H1 (cell line): ENCODE measurements at regions of chr11 and their contacts with region 1.

Region 1: DNA sequence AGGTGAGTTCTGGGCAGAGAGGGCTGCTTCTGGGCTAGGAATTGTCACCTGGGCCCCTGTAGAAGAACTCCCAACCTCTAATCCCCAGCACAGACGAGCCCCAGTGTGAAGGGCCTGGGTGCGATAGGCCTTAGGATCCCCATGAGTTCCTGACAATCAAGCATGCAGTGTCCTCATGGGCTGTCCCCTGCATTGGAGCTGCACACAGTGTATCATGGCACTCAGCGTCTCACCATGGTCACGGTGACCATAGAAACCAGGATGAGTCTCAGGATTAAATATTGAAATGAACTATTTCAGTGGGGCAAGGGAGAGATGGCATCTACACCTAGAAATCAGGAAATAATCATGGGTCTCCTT is 292 bp downstream of the SCGB2A1 start:
- DNase-seq: no peak
- H3K4me3 ChIP-seq: no peak overlapping the region
- H3K27ac ChIP-seq: no peak overlapping the region
- H3K4me1 ChIP-seq: no peaks in the 10 kb centered on the region
- H3K27me3 ChIP-seq: no peaks in the 10 kb centered on the region
- CTCF ChIP-seq: no peak
- EP300 ChIP-seq: no peak
- POLR2A ChIP-seq: no peak
- RAD21 ChIP-seq: no peak

Region 2: DNA sequence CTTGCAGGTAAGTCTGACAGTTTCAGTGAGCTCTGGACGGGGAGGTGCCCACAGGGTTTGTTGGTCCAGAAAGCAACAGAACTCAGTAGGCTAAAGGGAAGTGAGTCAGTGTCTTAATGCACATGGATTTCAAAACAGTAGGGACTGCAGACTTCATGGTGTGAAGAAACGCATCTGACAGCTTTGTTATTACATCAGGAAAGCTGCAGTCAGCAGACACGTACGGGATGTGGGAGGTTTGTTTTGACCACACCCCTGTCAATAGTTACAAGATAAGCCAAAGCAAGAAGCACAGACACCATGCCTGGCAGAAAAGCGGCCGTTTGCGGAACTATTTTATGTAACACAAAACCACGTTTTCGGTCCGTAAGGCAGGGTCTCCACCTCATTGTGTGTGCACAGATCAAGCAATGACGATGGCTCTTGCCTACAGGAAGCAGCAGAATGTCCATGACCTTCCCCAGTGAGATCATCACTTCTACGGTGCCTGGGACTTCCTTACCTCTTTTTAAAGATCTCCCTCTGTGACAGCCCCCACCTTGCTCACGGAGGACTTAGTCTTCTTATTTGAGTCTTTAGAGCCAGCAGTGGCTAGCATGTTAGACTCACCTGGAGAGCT is 183.2 kb before region 1 on chr11:
- CTCF ChIA-PET with region 1: no interaction called
- POLR2A ChIA-PET with region 1: no interaction called
- DNase-seq: no peak
- H3K4me3 ChIP-seq: no peak overlapping the region
- H3K27ac ChIP-seq: no peak overlapping the region
- H3K4me1 ChIP-seq: peaks cover 0 to 3% (median 3%) of the 10 kb centered on the region in 4 experiments; a peak in 3 of 7 replicates
- H3K27me3 ChIP-seq: no peaks in the 10 kb centered on the region; a peak in 1 of 7 replicates
- CTCF ChIP-seq: no peak
- EP300 ChIP-seq: no peak
- POLR2A ChIP-seq: no peak
- RAD21 ChIP-seq: no peak

Region 3: DNA sequence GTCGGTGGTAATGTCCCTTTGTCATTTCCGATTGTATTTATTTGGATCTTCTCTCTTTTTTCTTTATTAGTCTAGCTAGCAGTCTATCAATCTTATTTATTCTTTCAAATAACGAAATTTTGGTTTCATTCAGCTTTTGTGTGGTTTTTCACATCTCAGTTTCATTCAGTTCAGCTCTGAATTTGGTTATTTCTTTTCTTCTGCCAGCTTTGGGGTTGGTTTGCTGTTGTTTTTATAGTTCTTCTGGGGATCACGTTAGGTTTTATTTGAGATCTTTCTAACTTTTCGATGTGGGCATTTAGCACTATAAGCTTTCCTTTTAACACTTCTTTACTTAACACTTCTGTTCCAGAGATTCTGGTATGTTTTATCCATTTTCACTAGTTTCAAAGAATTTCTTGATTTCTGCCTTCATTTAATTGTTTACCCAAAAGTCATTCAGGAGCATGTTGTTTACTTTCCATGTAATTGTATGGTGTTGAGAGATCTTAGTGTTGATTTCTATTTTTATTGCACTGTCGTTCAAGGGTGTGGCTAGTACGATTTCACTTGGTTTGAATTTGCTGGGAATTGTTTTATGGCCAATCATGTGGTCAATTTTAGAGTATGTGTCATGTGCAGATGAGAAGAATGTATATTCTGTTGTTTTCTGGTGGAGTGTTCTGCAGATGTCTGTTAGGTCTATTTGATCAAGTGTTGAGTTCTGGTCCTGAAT is 26.5 kb before region 1 on chr11:
- CTCF ChIA-PET with region 1: no interaction called
- POLR2A ChIA-PET with region 1: no interaction called
- DNase-seq: no peak
- H3K4me3 ChIP-seq: no peak overlapping the region
- H3K27ac ChIP-seq: no peak overlapping the region
- H3K4me1 ChIP-seq: no peaks in the 10 kb centered on the region
- H3K27me3 ChIP-seq: no peaks in the 10 kb centered on the region
- CTCF ChIP-seq: no peak
- EP300 ChIP-seq: no peak
- POLR2A ChIP-seq: no peak
- RAD21 ChIP-seq: no peak

Region 4: GRCh38 chr11:62193952-62194351 is 14.8 kb before region 1 on chr11:
- CTCF ChIA-PET with region 1: interaction called, 21 read pairs
- POLR2A ChIA-PET with region 1: no interaction called
- DNase-seq: peak in 1 of 2 experiments; percentile 65
- H3K4me3 ChIP-seq: no peak overlapping the region
- H3K27ac ChIP-seq: no peak overlapping the region
- H3K4me1 ChIP-seq: peaks cover 0 to 4% (median 3%) of the 10 kb centered on the region in 4 experiments; a peak in 2 of 7 replicates
- H3K27me3 ChIP-seq: no peaks in the 10 kb centered on the region
- CTCF ChIP-seq: no peak
- EP300 ChIP-seq: no peak
- POLR2A ChIP-seq: no peak
- RAD21 ChIP-seq: no peak